GM10248 (cell line): ENCODE measurements at regions of chr7 and their contacts with region 1.

Region 1: GRCh38 chr7:37732253-37732652 is 48.7 kb downstream of the GPR141 start:
- DNase-seq: peak; percentile 65
- CTCF ChIP-seq: peak; percentile 83

Region 2: DNA sequence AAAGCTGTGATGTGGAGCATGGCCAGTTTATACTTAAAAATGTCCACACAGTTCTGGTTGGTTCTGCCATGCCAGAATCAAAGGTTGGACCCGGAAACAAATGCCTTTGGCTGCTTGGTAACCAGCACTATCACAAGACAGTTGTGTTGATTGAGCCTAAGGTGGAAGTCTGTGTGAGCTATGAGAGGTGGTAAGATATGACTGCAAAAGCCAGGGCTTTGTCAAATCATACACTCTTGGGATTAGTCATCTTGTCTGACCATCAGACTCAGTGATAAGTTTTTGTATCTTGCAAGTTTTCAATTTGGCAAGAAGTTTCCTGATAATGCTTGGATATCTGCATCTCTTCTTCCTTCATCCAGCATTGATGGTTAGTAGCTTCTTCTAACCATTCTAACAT is 13.2 kb before region 1 on chr7:
- CTCF ChIA-PET with region 1: interaction called, 13 read pairs
- POLR2A ChIA-PET with region 1: no interaction called
- DNase-seq: peak; percentile 40
- CTCF ChIP-seq: no peak

Region 3: GRCh38 chr7:37771801-37772200 is 39.5 kb after region 1 on chr7:
- CTCF ChIA-PET with region 1: no interaction called
- POLR2A ChIA-PET with region 1: no interaction called
- DNase-seq: no peak
- CTCF ChIP-seq: no peak